ENCODE measurements at regions of chr9 and their contacts with region 1.

Region 1: GRCh38 chr9:112844771-112845542 is 45.7 kb downstream of the SLC46A2 start:
- DNase-seq: peak; percentile 75 to 89 (median 89)
- ATAC-seq: peak; percentile 89
- H3K4me3 ChIP-seq: no peak overlapping the region
- H3K4me1 ChIP-seq: peaks cover 3% of the 10 kb centered on the region
- CTCF ChIP-seq: peak; percentile 98

Region 2: GRCh38 chr9:112898872-112899311 is 53.9 kb after region 1 on chr9:
- intact Hi-C with region 1: loop called in 1 of 2 experiments (anchors 2 kb)
- DNase-seq: no peak
- ATAC-seq: no peak
- H3K4me3 ChIP-seq: no peak overlapping the region
- H3K4me1 ChIP-seq: no peaks in the 10 kb centered on the region
- CTCF ChIP-seq: no peak

Measured in mucosa of descending colon (tissue), 3 donors.